Activated CD4-positive, alpha-beta memory T cell treated with anti-CD3 and anti-CD28 coated beads for 36 hours (primary cell): ENCODE measurements at regions of chr7 and their contacts with region 1.

Region 1: GRCh38 chr7:5854738-5855137 is 25.9 kb upstream of the OCM start:
- DNase-seq: no peak
- H3K4me3 Mint-ChIP-seq: no peak overlapping the region
- H3K27ac Mint-ChIP-seq: no peak overlapping the region
- H3K4me1 Mint-ChIP-seq: peaks cover 14% of the 10 kb centered on the region
- H3K27me3 Mint-ChIP-seq: no peaks in the 10 kb centered on the region

Region 2: GRCh38 chr7:5867060-5867459 is 12.3 kb after region 1 on chr7:
- CTCF ChIA-PET with region 1: interaction called, 13 read pairs
- POLR2A ChIA-PET with region 1: no interaction called
- intact Hi-C with region 1: no loop called
- DNase-seq: no peak
- H3K4me3 Mint-ChIP-seq: no peak overlapping the region
- H3K27ac Mint-ChIP-seq: no peak overlapping the region
- H3K4me1 Mint-ChIP-seq: no peaks in the 10 kb centered on the region
- H3K27me3 Mint-ChIP-seq: no peaks in the 10 kb centered on the region